ENCODE measurements at regions of chr11 and their contacts with region 1.

Region 1: GRCh38 chr11:109298865-109299264 is 123.1 kb upstream of the C11orf87 start:
- DNase-seq: no peak
- ATAC-seq: no peak
- H3K4me3 ChIP-seq: no peak overlapping the region
- H3K27ac ChIP-seq: no peak overlapping the region
- H3K4me1 ChIP-seq: no peaks in the 10 kb centered on the region
- H3K27me3 ChIP-seq: no peaks in the 10 kb centered on the region
- CTCF ChIP-seq: no peak

Region 2: GRCh38 chr11:108835624-108836023 is 463.2 kb before region 1 on chr11:
- CTCF ChIA-PET with region 1: no interaction called
- POLR2A ChIA-PET with region 1: interaction called, 10 read pairs
- in situ Hi-C with region 1: no loop called
- intact Hi-C with region 1: no loop called
- DNase-seq: no peak
- ATAC-seq: no peak
- H3K4me3 ChIP-seq: no peak overlapping the region
- H3K27ac ChIP-seq: no peak overlapping the region
- H3K4me1 ChIP-seq: no peaks in the 10 kb centered on the region
- H3K27me3 ChIP-seq: no peaks in the 10 kb centered on the region
- CTCF ChIP-seq: no peak

Region 3: GRCh38 chr11:109320595-109320994 is 21.7 kb after region 1 on chr11:
- CTCF ChIA-PET with region 1: no interaction called
- POLR2A ChIA-PET with region 1: no interaction called
- in situ Hi-C with region 1: no loop called
- intact Hi-C with region 1: no loop called
- DNase-seq: no peak
- ATAC-seq: no peak
- H3K4me3 ChIP-seq: no peak overlapping the region
- H3K27ac ChIP-seq: no peak overlapping the region
- H3K4me1 ChIP-seq: no peaks in the 10 kb centered on the region
- H3K27me3 ChIP-seq: no peaks in the 10 kb centered on the region
- CTCF ChIP-seq: no peak

Measured in Panc1 (cell line).